ENCODE measurements at regions of chr2 and their contacts with region 1.

Region 1: DNA sequence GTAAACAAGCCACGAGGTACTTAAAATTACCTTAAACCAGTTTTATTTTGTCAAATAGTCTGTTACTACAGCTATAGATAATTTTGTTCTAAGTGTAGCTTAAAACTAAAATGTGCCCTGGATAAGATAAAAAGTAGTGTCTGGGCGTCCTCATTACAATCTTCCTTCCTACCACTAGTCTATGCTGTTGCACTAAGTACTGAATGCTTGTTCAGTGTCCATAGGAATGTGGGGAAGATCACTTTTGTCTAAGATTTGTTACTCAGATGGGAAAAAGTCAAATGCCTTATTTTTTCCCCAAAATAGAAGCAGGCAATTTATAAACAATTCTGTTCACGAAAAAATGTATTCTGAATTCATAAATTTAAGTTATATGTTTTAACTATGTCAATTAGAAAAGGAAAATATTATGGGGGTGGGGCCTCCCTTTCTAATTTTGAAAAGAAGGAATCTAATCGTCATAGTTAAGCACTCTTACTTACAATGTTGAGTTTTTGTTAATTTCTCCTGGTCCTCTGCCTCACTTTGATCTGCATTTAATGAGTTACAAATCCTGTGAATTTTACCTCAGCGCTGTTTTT is 140.4 kb upstream of the VRK2 start:
- DNase-seq: peak; percentile 37
- H3K4me3 ChIP-seq: no peak overlapping the region
- H3K27ac ChIP-seq: no peak overlapping the region
- H3K27me3 ChIP-seq: no peaks in the 10 kb centered on the region
- CTCF ChIP-seq: peak; percentile 98

Region 2: DNA sequence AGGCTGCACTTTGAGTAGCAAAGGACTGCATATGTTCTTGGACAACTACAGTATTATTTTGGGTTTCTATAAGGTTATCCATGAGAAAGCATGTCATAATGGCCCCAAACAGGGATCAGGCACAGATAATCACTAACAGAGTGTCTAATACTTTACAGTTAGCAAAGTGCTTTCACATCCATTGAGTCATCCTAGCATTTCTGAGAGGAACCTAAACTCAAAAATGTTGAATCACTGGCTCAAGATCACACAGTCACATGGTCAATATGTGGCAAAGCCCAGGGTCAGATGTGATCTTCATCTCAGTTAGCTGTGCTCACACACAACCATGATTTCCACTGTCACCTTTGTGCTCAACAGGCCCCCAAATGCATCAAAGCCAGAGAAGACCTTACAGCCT is 15.8 kb before region 1 on chr2:
- CTCF ChIA-PET with region 1: interaction called, 31 read pairs
- POLR2A ChIA-PET with region 1: no interaction called
- DNase-seq: no peak
- H3K4me3 ChIP-seq: no peak overlapping the region
- H3K27ac ChIP-seq: no peak overlapping the region
- H3K27me3 ChIP-seq: no peaks in the 10 kb centered on the region
- CTCF ChIP-seq: no peak

Region 3: GRCh38 chr2:57920342-57920939 is 14.2 kb after region 1 on chr2:
- CTCF ChIA-PET with region 1: interaction called, 18 read pairs
- POLR2A ChIA-PET with region 1: no interaction called
- DNase-seq: no peak
- H3K4me3 ChIP-seq: no peak overlapping the region
- H3K27ac ChIP-seq: no peak overlapping the region
- H3K27me3 ChIP-seq: no peaks in the 10 kb centered on the region
- CTCF ChIP-seq: no peak

Region 4: GRCh38 chr2:58137221-58137620 is 231.0 kb after region 1 on chr2:
- CTCF ChIA-PET with region 1: no interaction called
- POLR2A ChIA-PET with region 1: no interaction called
- DNase-seq: no peak
- H3K4me3 ChIP-seq: no peak overlapping the region
- H3K27ac ChIP-seq: no peak overlapping the region
- H3K27me3 ChIP-seq: no peaks in the 10 kb centered on the region
- CTCF ChIP-seq: no peak

Region 5: DNA sequence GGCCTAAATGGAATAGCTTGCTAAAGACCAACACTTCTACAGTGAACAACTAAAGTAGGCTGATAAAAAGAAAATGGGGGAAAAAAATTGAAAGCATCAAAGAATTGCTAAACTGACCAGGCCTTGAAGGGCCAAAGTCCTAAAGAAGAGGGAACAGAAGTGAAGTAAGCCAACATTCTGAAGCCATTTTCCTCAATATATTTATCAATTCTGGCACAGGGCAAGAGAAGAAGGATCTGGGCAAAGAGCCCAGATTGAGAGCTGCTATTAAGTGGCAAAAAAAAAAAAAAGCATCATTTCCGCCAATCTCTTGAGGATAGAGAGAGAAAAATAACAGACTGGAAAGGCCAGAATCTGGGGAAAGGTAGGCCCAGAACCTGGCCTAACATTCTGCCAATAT is 309.2 kb after region 1 on chr2:
- CTCF ChIA-PET with region 1: interaction called, 16 read pairs
- POLR2A ChIA-PET with region 1: no interaction called
- DNase-seq: no peak
- H3K4me3 ChIP-seq: no peak overlapping the region
- H3K27ac ChIP-seq: no peak overlapping the region
- H3K27me3 ChIP-seq: no peaks in the 10 kb centered on the region
- CTCF ChIP-seq: no peak

Region 6: GRCh38 chr2:58448065-58448507 is 541.8 kb after region 1 on chr2:
- CTCF ChIA-PET with region 1: interaction called, 141 read pairs
- POLR2A ChIA-PET with region 1: no interaction called
- DNase-seq: peak; percentile 41
- H3K4me3 ChIP-seq: no peak overlapping the region
- H3K27ac ChIP-seq: no peak overlapping the region
- H3K27me3 ChIP-seq: no peaks in the 10 kb centered on the region
- CTCF ChIP-seq: peak; percentile 72